ENCODE measurements at regions of chr3 and their contacts with region 1.

Region 1: GRCh38 chr3:128170805-128171516 is 17.7 kb downstream of the EEFSEC start:
- DNase-seq: no peak
- H3K4me3 ChIP-seq: no peak overlapping the region
- CTCF ChIP-seq: peak; percentile 97

Region 2: GRCh38 chr3:128158964-128159363 is 12.0 kb before region 1 on chr3:
- CTCF ChIA-PET with region 1: interaction called, 11 read pairs
- POLR2A ChIA-PET with region 1: no interaction called
- DNase-seq: no peak
- H3K4me3 ChIP-seq: no peak overlapping the region
- CTCF ChIP-seq: no peak

Region 3: GRCh38 chr3:128226795-128227395 is 55.9 kb after region 1 on chr3:
- CTCF ChIA-PET with region 1: interaction called, 16 read pairs
- POLR2A ChIA-PET with region 1: no interaction called
- DNase-seq: no peak
- H3K4me3 ChIP-seq: no peak overlapping the region
- CTCF ChIP-seq: peak; percentile 90

Region 4: GRCh38 chr3:128426128-128426921 is 255.4 kb after region 1 on chr3:
- CTCF ChIA-PET with region 1: interaction called, 15 read pairs
- POLR2A ChIA-PET with region 1: no interaction called
- DNase-seq: no peak
- H3K4me3 ChIP-seq: peak overlapping the region; percentile 36; the same call in 1 of the 2 replicates
- CTCF ChIP-seq: peak; percentile 75

Region 5: DNA sequence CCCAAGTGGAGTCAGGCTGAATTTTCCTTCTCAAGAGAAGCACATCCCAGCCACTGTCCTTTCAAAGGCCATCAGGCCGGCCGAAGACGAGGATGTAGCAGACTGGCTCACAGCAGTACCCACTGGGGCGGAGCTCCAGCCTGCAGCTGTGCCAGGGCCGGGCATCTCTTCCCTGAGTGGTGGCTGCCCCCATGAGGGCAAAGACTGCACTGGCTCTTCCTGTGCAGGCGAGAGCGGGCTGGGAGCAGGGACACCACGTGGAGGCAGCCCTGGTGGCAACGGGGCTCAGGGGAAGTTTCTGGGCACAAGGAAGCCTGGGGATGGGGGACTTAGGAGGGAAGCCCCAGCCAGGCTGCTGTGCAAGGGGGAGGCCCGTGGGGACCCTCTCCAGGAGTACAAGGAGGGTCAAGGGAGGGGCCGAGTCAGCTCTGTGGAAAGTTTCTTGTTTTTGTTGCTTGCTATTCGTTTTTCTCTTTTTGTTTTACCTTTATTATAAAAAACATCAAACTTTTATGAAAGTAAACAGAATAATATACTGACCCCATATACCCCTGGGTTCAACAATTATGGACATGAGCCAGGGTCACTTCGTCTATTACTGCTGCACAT is 413.6 kb after region 1 on chr3:
- CTCF ChIA-PET with region 1: interaction called, 11 read pairs
- POLR2A ChIA-PET with region 1: no interaction called
- DNase-seq: peak; percentile 23
- H3K4me3 ChIP-seq: no peak overlapping the region
- CTCF ChIP-seq: peak; percentile 98

Measured in AG04449 (cell line).